ENCODE measurements at regions of chr20 and their contacts with region 1.

Region 1: DNA sequence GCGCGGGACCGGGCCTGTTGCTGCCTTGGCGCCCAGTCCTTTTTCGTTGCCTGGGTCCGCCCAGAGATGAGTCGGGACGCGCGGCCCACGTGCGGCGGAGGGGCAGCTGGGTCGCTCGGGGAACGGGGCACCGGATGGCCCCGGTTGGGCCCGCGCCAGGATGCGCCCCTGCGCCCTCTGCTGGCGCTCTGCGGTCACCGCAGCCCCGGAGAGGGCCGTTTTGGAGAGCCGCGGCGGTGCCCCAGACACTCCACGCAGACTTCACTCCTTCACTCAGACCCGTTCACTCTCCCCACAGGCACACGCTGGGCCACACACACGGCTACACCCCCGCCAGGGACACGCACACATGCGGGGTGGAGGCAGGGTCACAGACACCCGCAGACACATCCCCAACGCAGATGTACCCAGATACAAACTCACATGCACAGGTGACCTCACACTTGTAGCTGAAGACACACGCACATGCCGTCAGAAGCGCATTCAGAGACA is 38.8 kb downstream of the SRC start:
- DNase-seq: peak; percentile 66 to 87 (median 85)
- ATAC-seq: peak; percentile 70 to 82
- H3K4me3 ChIP-seq: peak overlapping the region; percentile 39
- H3K27ac ChIP-seq: no peak overlapping the region
- H3K4me1 ChIP-seq: no peaks in the 10 kb centered on the region
- H3K27me3 ChIP-seq: no peaks in the 10 kb centered on the region

Region 2: GRCh38 chr20:37192137-37192854 is 192.4 kb before region 1 on chr20:
- intact Hi-C with region 1: loop called in 1 of 4 experiments (anchors 10 kb)
- DNase-seq: peak; percentile 90 to 96 (median 93)
- ATAC-seq: peak; percentile 89 to 90
- H3K4me3 ChIP-seq: no peak overlapping the region
- H3K27ac ChIP-seq: no peak overlapping the region
- H3K4me1 ChIP-seq: no peaks in the 10 kb centered on the region
- H3K27me3 ChIP-seq: no peaks in the 10 kb centered on the region

Region 3: GRCh38 chr20:37265152-37265551 is 119.6 kb before region 1 on chr20:
- intact Hi-C with region 1: loop called in 3 of 4 experiments (anchors 5 kb)
- DNase-seq: no peak
- ATAC-seq: no peak
- H3K4me3 ChIP-seq: no peak overlapping the region
- H3K27ac ChIP-seq: no peak overlapping the region
- H3K4me1 ChIP-seq: no peaks in the 10 kb centered on the region
- H3K27me3 ChIP-seq: no peaks in the 10 kb centered on the region

Region 4: GRCh38 chr20:37270576-37271420 is 113.9 kb before region 1 on chr20:
- intact Hi-C with region 1: loop called in 3 of 4 experiments (anchors 5 kb)
- DNase-seq: no peak
- ATAC-seq: peak; percentile 28 to 31
- H3K4me3 ChIP-seq: no peak overlapping the region
- H3K27ac ChIP-seq: no peak overlapping the region
- H3K4me1 ChIP-seq: no peaks in the 10 kb centered on the region
- H3K27me3 ChIP-seq: no peaks in the 10 kb centered on the region

Region 5: DNA sequence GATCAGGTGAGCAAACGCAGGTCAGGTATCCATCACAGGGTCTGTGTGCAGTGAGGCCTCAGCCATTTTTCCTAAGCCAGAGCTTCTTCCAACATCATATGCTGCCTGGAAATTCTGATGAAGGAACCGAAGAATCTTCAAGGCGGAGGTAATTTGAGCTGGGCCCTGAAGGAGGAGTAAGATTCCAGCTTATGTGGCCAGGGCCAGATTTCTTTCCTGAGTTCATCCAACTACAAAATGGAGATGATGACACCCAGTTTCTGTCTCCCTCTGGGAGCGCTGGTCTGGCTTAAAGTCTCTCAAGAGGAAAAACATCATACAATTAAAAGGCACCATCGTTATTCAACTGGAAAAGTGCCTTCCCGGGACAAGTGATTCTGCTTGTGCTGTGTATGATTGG is 102.2 kb before region 1 on chr20:
- intact Hi-C with region 1: loop called in 2 of 4 experiments (anchors 5 to 10 kb)
- DNase-seq: no peak
- ATAC-seq: peak in 1 of 2 donors; percentile 29
- H3K4me3 ChIP-seq: no peak overlapping the region
- H3K27ac ChIP-seq: no peak overlapping the region
- H3K4me1 ChIP-seq: no peaks in the 10 kb centered on the region
- H3K27me3 ChIP-seq: no peaks in the 10 kb centered on the region

Region 6: DNA sequence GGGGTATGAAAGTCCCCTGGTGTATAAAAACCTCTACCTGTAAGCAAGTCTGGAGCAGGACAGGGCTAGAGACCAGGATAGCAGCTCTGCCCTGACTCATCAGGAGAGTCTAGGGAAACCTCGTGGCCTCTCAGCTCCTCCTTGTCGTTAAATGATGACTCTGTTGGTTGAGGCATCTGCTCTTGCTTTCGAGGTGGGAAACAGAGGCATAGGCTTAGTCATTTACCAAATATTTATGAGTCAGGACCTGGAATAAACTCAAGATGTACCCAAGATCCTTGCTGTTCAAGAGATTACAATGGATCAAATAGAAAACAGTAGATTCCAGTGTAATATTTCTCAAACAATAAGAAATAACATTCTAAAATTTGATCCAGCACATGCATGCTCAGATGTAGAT is 89.7 kb before region 1 on chr20:
- intact Hi-C with region 1: loop called in 1 of 4 experiments (anchors 10 kb)
- DNase-seq: no peak
- ATAC-seq: no peak
- H3K4me3 ChIP-seq: no peak overlapping the region
- H3K27ac ChIP-seq: no peak overlapping the region
- H3K4me1 ChIP-seq: peaks cover 16% of the 10 kb centered on the region
- H3K27me3 ChIP-seq: no peaks in the 10 kb centered on the region

Region 7: DNA sequence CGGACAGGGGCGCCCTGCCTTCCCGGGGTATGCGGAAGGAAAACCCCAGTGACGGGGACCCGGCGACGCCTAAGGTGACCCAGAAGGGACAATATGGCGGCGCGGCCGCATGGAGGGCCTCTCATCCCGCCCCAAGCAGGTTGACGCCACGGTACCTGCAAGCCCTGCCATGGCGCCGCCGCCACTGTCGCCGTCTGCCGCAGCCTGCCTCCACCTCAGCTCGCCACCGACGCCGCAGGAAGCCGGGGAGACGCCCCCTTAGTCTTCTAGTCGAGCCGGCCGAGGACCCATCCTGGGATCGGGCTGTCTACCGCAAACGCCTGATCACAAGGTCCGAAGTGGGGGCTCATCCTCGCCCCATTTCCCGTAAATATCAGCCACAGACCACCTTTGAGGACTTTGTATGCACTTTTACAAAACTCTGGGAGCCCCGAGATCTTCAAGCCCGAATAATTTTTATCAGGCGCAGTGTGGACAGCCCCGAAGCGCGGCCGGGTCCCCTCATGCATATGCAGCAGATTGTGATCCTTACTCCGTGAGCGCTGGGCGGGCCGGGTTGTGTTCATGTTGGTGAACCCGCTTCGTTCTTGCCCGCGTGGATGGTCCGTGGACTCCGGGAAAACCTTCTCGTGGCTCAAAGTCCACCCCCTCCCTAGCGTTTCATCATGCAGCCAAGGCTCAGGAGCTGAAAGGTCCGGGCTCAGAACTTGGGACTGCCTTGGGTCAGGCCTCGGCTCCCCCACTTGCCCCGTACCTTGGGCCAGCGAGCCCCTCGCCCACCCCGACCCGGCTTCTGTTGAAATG is 143.1 kb after region 1 on chr20 and contains the start of gene BLCAP:
- intact Hi-C with region 1: loop called in 1 of 4 experiments (anchors 10 kb)
- DNase-seq: peak; percentile 93 to 97 (median 95)
- ATAC-seq: peak; percentile 92 to 94
- H3K4me3 ChIP-seq: peak within 1 kb of the TSS; percentile 84
- H3K27ac ChIP-seq: peak within 1 kb of the TSS; percentile 94
- H3K4me1 ChIP-seq: peaks cover 24% of the 10 kb centered on the region
- H3K27me3 ChIP-seq: no peaks in the 10 kb centered on the region
- total RNA-seq, gene BLCAP: 87.4 to 103 (median 93.3) TPM

Region 8: GRCh38 chr20:37697314-37697713 is 312.6 kb after region 1 on chr20:
- intact Hi-C with region 1: no loop called
- DNase-seq: no peak
- ATAC-seq: no peak
- H3K4me3 ChIP-seq: no peak overlapping the region
- H3K27ac ChIP-seq: no peak overlapping the region
- H3K4me1 ChIP-seq: peaks cover 4% of the 10 kb centered on the region
- H3K27me3 ChIP-seq: no peaks in the 10 kb centered on the region

Measured in right cardiac atrium (tissue), 5 donors.